Activated B cell treated with CpG ODN at 0.5 μM for 24 hours (primary cell): ENCODE measurements at regions of chr1 and their contacts with region 1.

Region 1: GRCh38 chr1:16206547-16207317 is 5.7 kb downstream of the ARHGEF19 start:
- DNase-seq: peak; percentile 82
- ATAC-seq: peak; percentile 89
- H3K4me3 Mint-ChIP-seq: peak overlapping the region; percentile 91
- H3K27ac Mint-ChIP-seq: peak overlapping the region; percentile 91
- H3K4me1 Mint-ChIP-seq: peaks cover 3% of the 10 kb centered on the region
- H3K27me3 Mint-ChIP-seq: no peaks in the 10 kb centered on the region
- CTCF ChIP-seq: no peak

Region 2: GRCh38 chr1:15918962-15919715 is 287.6 kb before region 1 on chr1:
- CTCF ChIA-PET with region 1: no interaction called
- POLR2A ChIA-PET with region 1: no interaction called
- intact Hi-C with region 1: no loop called
- DNase-seq: no peak
- ATAC-seq: peak; percentile 70
- H3K4me3 Mint-ChIP-seq: no peak overlapping the region
- H3K27ac Mint-ChIP-seq: peak overlapping the region; percentile 32
- H3K4me1 Mint-ChIP-seq: peaks cover 31% of the 10 kb centered on the region
- H3K27me3 Mint-ChIP-seq: no peaks in the 10 kb centered on the region
- CTCF ChIP-seq: no peak

Region 3: GRCh38 chr1:16167331-16168143 is 39.2 kb before region 1 on chr1:
- CTCF ChIA-PET with region 1: no interaction called
- POLR2A ChIA-PET with region 1: interaction called, 4 read pairs
- intact Hi-C with region 1: loop called (anchors 2 kb)
- DNase-seq: peak; percentile 73
- ATAC-seq: peak; percentile 89
- H3K4me3 Mint-ChIP-seq: peak overlapping the region; percentile 67
- H3K27ac Mint-ChIP-seq: no peak overlapping the region
- H3K4me1 Mint-ChIP-seq: peaks cover 23% of the 10 kb centered on the region
- H3K27me3 Mint-ChIP-seq: peaks cover 6% of the 10 kb centered on the region
- CTCF ChIP-seq: no peak

Region 4: DNA sequence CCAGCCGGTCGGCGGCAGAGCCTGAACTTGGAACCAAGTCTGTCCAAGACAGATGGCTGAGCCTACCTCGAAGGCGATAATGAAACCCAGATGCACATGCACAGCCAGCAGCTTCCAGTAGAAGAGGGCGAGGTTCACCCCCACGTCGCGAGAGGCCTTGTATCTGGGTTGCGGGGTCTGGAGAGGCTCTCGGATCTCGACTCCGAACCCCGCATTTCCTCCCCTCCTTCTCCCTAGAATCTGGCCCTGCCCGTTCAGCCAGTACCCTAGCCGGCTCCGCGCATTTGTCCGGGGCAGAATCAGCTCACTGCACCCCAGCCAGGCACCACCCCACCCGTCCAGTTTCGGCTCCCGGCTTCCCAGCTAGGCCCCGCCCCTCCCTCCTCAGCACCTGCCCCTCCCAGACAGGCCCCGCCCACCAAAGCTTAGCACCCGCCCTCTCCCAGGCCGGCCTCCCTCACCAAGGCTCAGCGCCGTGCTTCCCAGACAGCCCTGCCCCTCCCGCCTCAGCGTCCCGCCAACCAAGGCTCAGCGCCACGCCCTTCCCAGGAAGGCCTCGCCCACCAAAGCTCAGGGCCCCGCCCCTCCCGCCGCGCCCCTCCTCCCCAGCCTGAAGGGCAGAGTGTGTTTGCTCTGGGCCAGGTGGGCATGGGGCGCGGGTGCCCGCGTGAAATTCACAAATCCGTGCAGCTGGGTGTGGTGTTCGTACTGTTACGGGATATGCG is 10.5 kb after region 1 on chr1:
- CTCF ChIA-PET with region 1: interaction called, 10 read pairs
- POLR2A ChIA-PET with region 1: interaction called, 32 read pairs
- intact Hi-C with region 1: loop called (anchors 1 kb)
- DNase-seq: peak; percentile 88
- ATAC-seq: peak; percentile 99
- H3K4me3 Mint-ChIP-seq: peak overlapping the region; percentile 89
- H3K27ac Mint-ChIP-seq: peak overlapping the region; percentile 41
- H3K4me1 Mint-ChIP-seq: peaks cover 20% of the 10 kb centered on the region
- H3K27me3 Mint-ChIP-seq: peaks cover 4% of the 10 kb centered on the region
- CTCF ChIP-seq: no peak

Region 5: GRCh38 chr1:16236511-16237342 is 30.0 kb after region 1 on chr1 and contains the start of gene CPLANE2:
- CTCF ChIA-PET with region 1: no interaction called
- POLR2A ChIA-PET with region 1: interaction called, 6 read pairs
- intact Hi-C with region 1: loop called (anchors 1 kb)
- DNase-seq: peak; percentile 97
- ATAC-seq: peak; percentile 82
- H3K4me3 Mint-ChIP-seq: peak within 1 kb of the TSS; percentile 90
- H3K27ac Mint-ChIP-seq: peak within 1 kb of the TSS; percentile 95
- H3K4me1 Mint-ChIP-seq: peaks cover 12% of the 10 kb centered on the region
- H3K27me3 Mint-ChIP-seq: no peaks in the 10 kb centered on the region
- CTCF ChIP-seq: no peak
- total RNA-seq, gene CPLANE2: 5.0 and 5.1 TPM in 2 replicates

Region 6: DNA sequence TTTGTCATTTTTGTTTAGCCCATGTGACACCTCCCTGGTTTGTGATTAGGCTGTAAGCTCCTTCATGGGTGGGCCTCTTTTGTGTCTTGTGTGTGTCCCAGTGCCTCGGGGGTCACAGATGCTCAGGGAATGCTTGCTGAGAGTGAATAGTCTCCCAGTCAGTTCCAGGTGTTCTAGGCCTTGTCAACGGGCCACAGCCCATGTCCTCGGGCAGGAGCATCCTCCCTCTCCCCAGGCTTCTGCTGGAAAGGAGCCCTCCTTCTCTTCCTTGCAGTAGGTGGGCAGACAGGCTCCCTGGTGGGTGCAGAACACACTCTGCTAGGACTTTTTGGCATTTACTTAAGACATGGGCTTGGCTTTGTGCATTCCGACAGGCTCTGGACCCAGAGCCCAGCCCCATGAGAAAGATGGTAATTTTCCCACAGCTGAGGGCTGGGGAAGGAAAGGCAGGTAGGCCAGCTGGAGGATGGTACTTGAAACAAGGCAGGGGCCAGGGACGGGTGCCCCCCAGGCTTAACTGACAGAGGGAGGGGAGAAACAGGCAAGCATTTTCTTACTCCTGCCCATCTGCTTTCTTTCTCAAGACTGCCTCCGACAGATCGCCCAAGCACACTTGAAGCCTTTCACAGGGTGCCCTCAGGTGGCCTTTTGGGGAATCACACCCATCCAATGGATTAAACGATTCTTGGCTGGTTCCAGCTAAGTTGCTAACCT is 37.4 kb after region 1 on chr1:
- CTCF ChIA-PET with region 1: interaction called, 17 read pairs
- POLR2A ChIA-PET with region 1: no interaction called
- intact Hi-C with region 1: loop called (anchors 1 kb)
- DNase-seq: peak; percentile 59
- ATAC-seq: peak; percentile 92
- H3K4me3 Mint-ChIP-seq: no peak overlapping the region
- H3K27ac Mint-ChIP-seq: no peak overlapping the region
- H3K4me1 Mint-ChIP-seq: peaks cover 14% of the 10 kb centered on the region
- H3K27me3 Mint-ChIP-seq: no peaks in the 10 kb centered on the region
- CTCF ChIP-seq: no peak

Region 7: GRCh38 chr1:17141441-17142197 is 934.9 kb after region 1 on chr1:
- CTCF ChIA-PET with region 1: no interaction called
- POLR2A ChIA-PET with region 1: no interaction called
- intact Hi-C with region 1: no loop called
- DNase-seq: no peak
- ATAC-seq: peak; percentile 78
- H3K4me3 Mint-ChIP-seq: peak overlapping the region; percentile 72
- H3K27ac Mint-ChIP-seq: peak overlapping the region; percentile 94
- H3K4me1 Mint-ChIP-seq: peaks cover 33% of the 10 kb centered on the region
- H3K27me3 Mint-ChIP-seq: no peaks in the 10 kb centered on the region
- CTCF ChIP-seq: no peak